ENCODE measurements at regions of chr10 and their contacts with region 1.

Region 1: DNA sequence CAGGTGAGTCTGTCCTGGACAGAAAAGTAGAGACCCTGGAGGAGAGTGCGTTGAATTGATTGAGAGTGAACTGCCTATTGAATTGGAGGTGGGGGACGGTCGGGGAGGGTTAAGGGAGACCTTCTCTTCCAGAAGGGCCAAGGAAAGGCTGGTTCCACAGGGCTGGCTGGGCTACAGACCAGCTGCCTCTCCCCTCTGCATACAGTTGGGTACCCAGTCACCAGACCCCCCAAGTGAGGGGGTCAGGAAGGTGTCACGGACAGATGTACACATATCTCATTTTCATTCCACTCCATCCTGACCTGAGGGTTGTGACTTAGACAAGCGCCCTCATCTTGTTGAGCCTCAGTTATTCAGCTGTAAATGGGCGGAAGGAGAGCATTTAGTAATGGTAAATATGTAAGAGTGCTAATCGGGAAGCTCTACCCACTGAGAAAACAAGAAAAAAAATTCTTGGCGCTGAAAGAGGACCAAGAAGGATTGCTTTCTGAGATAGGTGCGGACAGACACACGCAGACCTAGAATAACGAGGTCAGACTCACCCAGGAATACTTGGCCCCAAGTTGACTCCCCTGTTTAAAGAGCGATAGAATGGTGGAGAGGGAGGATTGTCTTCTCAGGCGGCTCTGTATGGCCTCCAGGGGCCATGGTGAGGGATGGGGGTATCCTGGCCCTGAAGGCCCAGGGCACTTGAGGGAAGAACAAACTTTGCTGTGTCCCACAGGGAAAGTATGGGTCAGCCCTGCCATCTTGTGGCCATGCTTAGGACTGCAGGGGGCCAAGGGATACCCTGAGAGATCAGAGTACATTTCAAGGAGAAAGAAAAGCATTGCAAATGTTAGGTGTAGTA is 7.2 kb upstream of the MBL2 start:
- DNase-seq: peak; percentile 99
- ATAC-seq: peak; percentile 94
- H3K4me3 ChIP-seq: no peak overlapping the region
- H3K27ac ChIP-seq: no peak overlapping the region
- H3K4me1 ChIP-seq: no peaks in the 10 kb centered on the region
- H3K27me3 ChIP-seq: no peaks in the 10 kb centered on the region
- CTCF ChIP-seq: peak; percentile 100

Region 2: GRCh38 chr10:51001587-51001986 is 1778.2 kb before region 1 on chr10:
- CTCF ChIA-PET with region 1: no interaction called
- POLR2A ChIA-PET with region 1: no interaction called
- intact Hi-C with region 1: loop called (anchors 1 kb)
- DNase-seq: peak; percentile 85
- ATAC-seq: peak; percentile 87
- H3K4me3 ChIP-seq: no peak overlapping the region
- H3K27ac ChIP-seq: no peak overlapping the region
- H3K4me1 ChIP-seq: no peaks in the 10 kb centered on the region
- H3K27me3 ChIP-seq: peaks cover 73% of the 10 kb centered on the region
- CTCF ChIP-seq: peak; percentile 99

Region 3: GRCh38 chr10:52308251-52309031 is 471.3 kb before region 1 on chr10:
- CTCF ChIA-PET with region 1: interaction called, 4 read pairs
- POLR2A ChIA-PET with region 1: no interaction called
- intact Hi-C with region 1: loop called (anchors 2 kb)
- DNase-seq: peak; percentile 94
- ATAC-seq: peak; percentile 86
- H3K4me3 ChIP-seq: peak overlapping the region; percentile 55
- H3K27ac ChIP-seq: 0 out of 2 replicates have a peak overlapping the region, but pooled peaks have one; percentile 2
- H3K4me1 ChIP-seq: peaks cover 36% of the 10 kb centered on the region
- H3K27me3 ChIP-seq: no peaks in the 10 kb centered on the region
- CTCF ChIP-seq: peak; percentile 99

Region 4: GRCh38 chr10:52443419-52444388 is 336.1 kb before region 1 on chr10:
- CTCF ChIA-PET with region 1: no interaction called
- POLR2A ChIA-PET with region 1: no interaction called
- intact Hi-C with region 1: loop called (anchors 1 kb)
- DNase-seq: peak; percentile 100
- ATAC-seq: peak; percentile 80
- H3K4me3 ChIP-seq: peak overlapping the region; percentile 36
- H3K27ac ChIP-seq: peak overlapping the region; percentile 82
- H3K4me1 ChIP-seq: peaks cover 62% of the 10 kb centered on the region
- H3K27me3 ChIP-seq: no peaks in the 10 kb centered on the region
- CTCF ChIP-seq: no peak

Region 5: DNA sequence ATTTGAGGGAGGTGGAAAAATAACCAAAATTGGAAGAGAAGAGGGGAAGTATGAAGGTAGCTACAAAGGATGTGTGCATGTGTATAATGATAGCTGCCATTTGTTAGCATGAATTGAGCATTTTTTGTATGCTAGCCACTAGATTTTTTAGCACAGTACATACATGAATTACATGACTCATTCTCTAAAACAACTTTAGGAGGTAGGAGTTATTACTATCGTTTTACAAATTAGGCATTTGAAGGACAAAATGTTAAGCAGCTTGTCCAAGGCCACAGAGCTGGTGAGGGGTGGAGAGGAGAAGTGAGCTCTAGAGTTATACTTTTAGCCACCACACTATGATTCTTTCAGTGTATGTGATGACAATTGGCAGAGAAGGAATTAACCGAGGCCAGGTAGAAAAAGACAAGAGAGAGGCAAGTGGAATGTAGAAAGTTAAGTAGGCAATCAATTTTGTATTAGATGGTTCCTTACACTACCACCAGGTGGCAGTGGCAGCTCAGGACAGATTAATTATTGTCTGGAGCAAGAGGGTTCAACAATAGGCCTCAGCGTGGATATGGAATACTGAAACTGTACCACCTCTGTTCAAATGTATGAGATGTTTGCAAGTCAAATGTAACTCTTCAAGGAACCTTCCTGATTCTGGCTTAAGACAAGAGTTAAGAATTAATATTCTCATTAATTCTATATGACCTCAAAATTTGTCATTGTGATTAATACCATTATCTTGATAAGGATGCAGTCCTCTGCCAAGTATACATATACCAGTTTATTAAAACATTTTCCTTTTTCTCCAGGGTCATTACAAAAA is 135.2 kb before region 1 on chr10:
- CTCF ChIA-PET with region 1: interaction called, 18 read pairs
- POLR2A ChIA-PET with region 1: no interaction called
- intact Hi-C with region 1: loop called (anchors 1 kb)
- DNase-seq: peak; percentile 97
- ATAC-seq: peak; percentile 83
- H3K4me3 ChIP-seq: peak overlapping the region; percentile 18; the same call in 1 of the 2 replicates
- H3K27ac ChIP-seq: no peak overlapping the region
- H3K4me1 ChIP-seq: peaks cover 15% of the 10 kb centered on the region
- H3K27me3 ChIP-seq: no peaks in the 10 kb centered on the region
- CTCF ChIP-seq: peak; percentile 100

Region 6: DNA sequence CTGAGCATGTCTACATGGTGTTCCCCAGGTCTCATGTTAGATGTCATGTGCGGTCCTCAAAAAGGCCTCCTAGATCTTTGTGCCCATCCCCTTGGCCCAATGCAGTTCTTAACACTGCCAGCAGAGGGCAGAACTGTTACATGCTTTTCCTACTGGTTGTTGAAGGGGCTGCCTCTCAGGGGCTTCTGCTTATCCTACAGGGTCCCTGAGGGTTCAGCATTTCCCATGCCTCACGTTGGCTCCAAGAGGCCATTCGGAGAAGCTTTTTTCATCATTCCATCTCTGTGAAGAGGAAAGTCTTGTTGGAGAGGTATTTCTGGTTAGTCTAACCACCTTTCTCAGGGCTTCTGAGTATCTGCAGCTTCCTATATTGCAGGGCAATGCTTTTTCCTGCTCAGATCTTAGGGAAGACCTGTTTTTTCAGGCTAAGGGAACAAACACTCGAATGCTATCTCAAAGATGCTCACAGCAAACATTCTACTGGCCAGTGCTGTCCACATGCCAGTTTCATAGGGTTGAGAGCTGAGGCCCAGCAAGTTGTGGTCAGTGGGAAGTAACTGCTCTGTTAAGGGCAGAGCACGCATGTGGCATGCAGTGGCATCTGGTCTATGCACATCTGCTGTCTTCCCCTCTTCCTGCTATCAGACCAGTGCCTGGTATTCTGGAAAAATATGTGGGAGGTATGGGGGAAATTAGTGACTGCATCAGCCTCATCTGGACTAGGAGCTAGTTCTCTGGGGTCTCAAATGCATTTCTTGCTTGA is 38.7 kb before region 1 on chr10:
- CTCF ChIA-PET with region 1: interaction called, 26 read pairs
- POLR2A ChIA-PET with region 1: no interaction called
- intact Hi-C with region 1: loop called (anchors 1 kb)
- DNase-seq: peak; percentile 96
- ATAC-seq: peak; percentile 72
- H3K4me3 ChIP-seq: no peak overlapping the region
- H3K27ac ChIP-seq: no peak overlapping the region
- H3K4me1 ChIP-seq: no peaks in the 10 kb centered on the region
- H3K27me3 ChIP-seq: no peaks in the 10 kb centered on the region
- CTCF ChIP-seq: peak; percentile 100

Region 7: GRCh38 chr10:52836816-52837215 is 57.0 kb after region 1 on chr10:
- CTCF ChIA-PET with region 1: no interaction called
- POLR2A ChIA-PET with region 1: no interaction called
- intact Hi-C with region 1: no loop called
- DNase-seq: no peak
- ATAC-seq: no peak
- H3K4me3 ChIP-seq: no peak overlapping the region
- H3K27ac ChIP-seq: no peak overlapping the region
- H3K4me1 ChIP-seq: no peaks in the 10 kb centered on the region
- H3K27me3 ChIP-seq: no peaks in the 10 kb centered on the region
- CTCF ChIP-seq: no peak